ENCODE measurements at regions of chr11 and their contacts with region 1.

Region 1: DNA sequence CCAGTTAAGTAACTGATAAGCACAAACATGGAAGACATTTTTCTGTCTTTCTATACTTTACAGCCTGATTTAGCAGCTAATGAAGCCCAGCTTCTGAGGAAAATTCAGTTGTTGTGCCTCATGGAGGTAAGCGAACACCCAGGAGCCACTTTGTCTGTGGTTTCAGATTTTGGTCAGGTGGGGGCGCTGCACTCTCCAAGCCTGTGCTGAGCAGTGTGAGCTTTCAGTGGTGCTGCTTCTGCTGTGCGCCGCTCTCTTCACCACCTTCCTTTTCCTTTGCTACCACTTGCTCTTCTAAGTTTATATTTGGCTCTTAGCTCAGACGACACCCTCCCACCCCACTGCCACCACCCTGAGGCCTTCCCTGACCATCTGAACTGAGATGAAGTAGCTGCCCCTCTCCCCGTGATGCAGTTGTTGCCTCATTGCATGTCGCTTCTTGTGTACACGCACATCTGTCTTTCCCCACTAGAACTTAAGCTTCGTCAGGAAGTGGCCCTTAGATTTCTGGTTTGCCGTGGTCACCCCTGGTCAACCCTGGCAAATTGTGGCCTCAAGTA is 14.0 kb downstream of the PSMD13 start:
- DNase-seq: peak; percentile 90
- ATAC-seq: peak; percentile 97
- H3K4me3 Mint-ChIP-seq: no peak overlapping the region
- H3K27ac Mint-ChIP-seq: peak overlapping the region; percentile 56
- H3K4me1 Mint-ChIP-seq: peaks cover 13% of the 10 kb centered on the region
- H3K27me3 Mint-ChIP-seq: no peaks in the 10 kb centered on the region

Region 2: DNA sequence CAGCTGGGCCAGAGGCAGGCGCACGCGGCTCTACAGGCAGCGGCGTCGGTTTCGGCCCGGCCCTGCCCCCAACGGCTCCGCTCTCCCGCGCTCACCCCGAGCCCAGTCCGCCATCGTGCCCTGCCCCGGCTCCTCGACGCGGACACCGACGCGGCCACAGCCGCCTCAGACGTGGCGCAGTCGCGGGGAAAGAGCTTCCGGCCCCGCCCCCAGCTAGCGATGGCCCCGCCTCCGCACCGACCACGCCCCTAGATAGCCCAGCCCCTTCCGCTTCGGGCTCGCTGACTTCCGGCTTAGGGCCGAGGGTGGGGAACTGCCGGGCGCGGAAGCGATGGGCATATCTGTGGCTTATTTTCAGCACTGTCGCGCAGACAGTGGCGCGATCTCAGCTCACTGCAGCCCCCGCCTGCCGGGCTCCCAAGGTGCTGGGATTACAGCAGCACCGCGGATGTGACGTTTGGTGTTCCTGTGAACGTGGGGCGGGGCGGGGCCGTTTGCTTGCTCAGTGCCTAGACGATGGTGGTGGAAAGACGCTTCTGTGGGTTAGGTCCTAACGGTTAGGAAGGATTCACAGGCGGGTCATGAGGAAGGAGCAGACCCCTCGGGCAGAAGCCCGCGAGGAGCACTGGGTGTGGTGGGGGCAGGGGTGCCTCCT is 43.5 kb before region 1 on chr11 and contains the starts of genes BET1L and RIC8A:
- CTCF ChIA-PET with region 1: interaction called, 12 read pairs
- POLR2A ChIA-PET with region 1: no interaction called
- intact Hi-C with region 1: no loop called
- DNase-seq: peak; percentile 99
- ATAC-seq: peak; percentile 89
- H3K4me3 Mint-ChIP-seq: peak within 1 kb of the TSS; percentile 94
- H3K27ac Mint-ChIP-seq: peak within 1 kb of the TSS; percentile 99
- H3K4me1 Mint-ChIP-seq: peaks cover 56% of the 10 kb centered on the region
- H3K27me3 Mint-ChIP-seq: no peaks in the 10 kb centered on the region
- total RNA-seq, gene BET1L: 45.5 to 49.4 TPM
- total RNA-seq, gene RIC8A: 104 to 124 TPM

Region 3: GRCh38 chr11:236774-237767 is 13.7 kb before region 1 on chr11 and contains the start of gene PSMD13:
- CTCF ChIA-PET with region 1: interaction called, 69 read pairs
- POLR2A ChIA-PET with region 1: no interaction called
- intact Hi-C with region 1: no loop called
- DNase-seq: peak; percentile 96
- ATAC-seq: peak; percentile 86
- H3K4me3 Mint-ChIP-seq: peak within 1 kb of the TSS; percentile 92
- H3K27ac Mint-ChIP-seq: peak within 1 kb of the TSS; percentile 99
- H3K4me1 Mint-ChIP-seq: peaks cover 48% of the 10 kb centered on the region
- H3K27me3 Mint-ChIP-seq: no peaks in the 10 kb centered on the region
- total RNA-seq, gene PSMD13: 134 to 212 TPM

Region 4: DNA sequence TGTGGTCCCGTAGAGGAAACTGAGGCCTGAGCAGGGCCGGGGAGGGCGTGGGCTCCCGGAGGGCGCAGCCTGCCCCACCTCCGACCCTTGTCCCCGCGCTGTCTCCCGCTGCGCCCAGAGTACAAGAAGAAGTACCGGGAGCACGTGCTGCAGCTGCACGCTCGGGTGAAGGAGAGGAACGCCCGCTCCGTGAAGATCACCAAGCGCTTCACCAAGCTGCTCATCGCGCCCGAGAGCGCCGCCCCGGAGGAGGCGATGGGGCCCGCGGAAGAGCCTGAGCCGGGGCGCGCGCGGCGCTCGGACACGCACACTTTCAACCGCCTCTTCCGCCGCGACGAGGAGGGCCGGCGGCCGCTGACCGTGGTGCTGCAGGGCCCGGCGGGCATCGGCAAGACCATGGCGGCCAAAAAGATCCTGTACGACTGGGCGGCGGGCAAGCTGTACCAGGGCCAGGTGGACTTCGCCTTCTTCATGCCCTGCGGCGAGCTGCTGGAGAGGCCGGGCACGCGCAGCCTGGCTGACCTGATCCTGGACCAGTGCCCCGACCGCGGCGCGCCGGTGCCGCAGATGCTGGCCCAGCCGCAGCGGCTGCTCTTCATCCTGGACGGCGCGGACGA is 29.3 kb after region 1 on chr11:
- CTCF ChIA-PET with region 1: interaction called, 32 read pairs
- POLR2A ChIA-PET with region 1: no interaction called
- intact Hi-C with region 1: no loop called
- DNase-seq: peak; percentile 72
- ATAC-seq: peak; percentile 69
- H3K4me3 Mint-ChIP-seq: peak overlapping the region; percentile 58
- H3K27ac Mint-ChIP-seq: no peak overlapping the region
- H3K4me1 Mint-ChIP-seq: peaks cover 44% of the 10 kb centered on the region
- H3K27me3 Mint-ChIP-seq: peaks cover 21% of the 10 kb centered on the region

Region 5: DNA sequence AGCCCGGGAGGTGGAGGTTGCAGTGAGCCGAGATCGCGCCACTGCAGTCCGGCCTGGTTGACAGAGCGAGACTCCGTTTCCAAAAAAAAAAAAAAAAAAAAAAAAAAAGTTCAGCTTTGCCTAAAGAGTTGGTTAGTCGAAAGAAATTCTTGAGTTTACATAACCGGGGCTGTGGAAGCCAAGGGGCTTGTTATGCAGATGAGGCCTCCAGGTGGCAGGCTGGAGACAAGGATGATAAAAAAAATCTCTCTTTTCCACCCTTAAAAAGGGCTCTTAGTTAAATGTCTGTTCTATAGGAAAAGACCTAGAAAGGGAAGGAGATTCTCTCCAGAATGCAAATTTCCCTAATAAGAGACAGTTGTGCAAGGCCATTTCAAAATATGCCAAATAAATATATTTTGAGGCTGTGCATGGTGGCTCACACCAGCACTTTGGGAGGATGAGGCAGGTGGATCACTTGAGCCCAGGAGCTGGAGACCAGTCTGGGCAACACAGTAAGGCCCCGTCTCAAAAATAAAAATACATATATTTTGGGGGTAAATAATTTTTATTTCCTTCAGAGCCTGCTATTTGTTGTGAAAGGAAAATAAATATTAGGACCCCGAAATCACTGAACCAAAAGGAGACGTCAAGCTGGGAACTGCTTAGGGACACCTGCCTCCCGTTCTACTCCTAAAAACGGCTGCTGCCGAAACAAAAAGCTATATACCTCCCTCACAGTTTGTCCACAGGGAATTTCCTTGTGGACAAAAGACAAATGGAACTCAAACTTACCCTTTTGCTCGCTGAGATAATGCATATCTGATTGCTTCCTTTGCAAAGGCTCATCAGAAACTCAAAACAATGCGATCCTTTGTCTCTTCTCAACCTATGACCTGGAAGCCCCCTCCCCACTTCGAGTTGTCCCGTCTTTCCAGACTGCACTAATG is 54.4 kb after region 1 on chr11:
- CTCF ChIA-PET with region 1: interaction called, 46 read pairs
- POLR2A ChIA-PET with region 1: no interaction called
- intact Hi-C with region 1: loop called (anchors 2 kb)
- DNase-seq: peak; percentile 79
- ATAC-seq: no peak
- H3K4me3 Mint-ChIP-seq: no peak overlapping the region
- H3K27ac Mint-ChIP-seq: peak overlapping the region; percentile 1
- H3K4me1 Mint-ChIP-seq: peaks cover 20% of the 10 kb centered on the region
- H3K27me3 Mint-ChIP-seq: no peaks in the 10 kb centered on the region

Region 6: DNA sequence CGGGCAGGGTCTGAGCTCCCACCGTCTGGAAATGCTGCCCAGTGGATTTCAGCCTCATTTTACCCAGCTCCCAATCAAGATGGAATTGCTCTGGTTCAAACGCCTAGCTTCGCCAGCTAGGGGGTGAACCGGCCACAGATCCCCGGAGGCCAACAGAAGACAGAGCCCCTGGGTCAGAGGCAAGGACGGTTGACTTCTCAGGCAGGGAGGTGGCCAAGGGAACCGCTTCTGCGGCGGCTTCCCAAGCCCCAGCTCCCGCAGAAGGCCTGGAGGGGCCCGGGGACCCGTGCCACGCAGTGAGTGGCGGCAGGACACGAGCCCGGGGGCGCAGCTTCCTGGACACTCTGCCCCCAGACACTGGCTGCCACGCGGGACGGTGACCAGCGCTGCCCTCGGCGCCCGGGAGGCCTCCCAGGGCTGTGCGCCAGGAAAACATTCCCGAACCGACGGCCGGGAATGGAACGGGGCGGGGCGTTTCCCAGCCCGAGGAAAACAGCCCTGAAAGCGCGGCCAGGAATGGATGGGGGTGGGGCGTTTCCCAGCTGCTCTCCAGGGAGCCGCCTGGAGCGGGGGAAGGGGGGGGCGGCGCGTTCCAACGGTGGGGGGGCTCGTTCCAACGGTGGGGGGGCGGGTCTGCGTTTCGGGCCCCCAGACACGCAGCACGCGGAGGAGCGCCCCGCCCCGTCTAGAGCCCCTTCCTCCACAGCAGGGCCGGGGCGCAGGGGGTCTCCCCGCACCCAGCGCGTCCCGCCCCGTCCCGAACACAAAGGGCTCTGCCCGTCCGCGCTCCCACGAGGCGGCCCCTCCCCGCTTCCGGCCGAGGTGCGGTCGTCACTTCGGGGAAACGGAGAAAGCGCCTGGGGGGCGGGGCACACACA is 105.0 kb after region 1 on chr11:
- CTCF ChIA-PET with region 1: interaction called, 22 read pairs
- POLR2A ChIA-PET with region 1: interaction called, 4 read pairs
- intact Hi-C with region 1: loop called in 1 of 2 experiments (anchors 5 kb)
- DNase-seq: peak; percentile 94
- ATAC-seq: peak; percentile 63
- H3K4me3 Mint-ChIP-seq: no peak overlapping the region
- H3K27ac Mint-ChIP-seq: peak overlapping the region; percentile 96
- H3K4me1 Mint-ChIP-seq: peaks cover 47% of the 10 kb centered on the region
- H3K27me3 Mint-ChIP-seq: no peaks in the 10 kb centered on the region

Region 7: GRCh38 chr11:2208691-2209369 is 1958.0 kb after region 1 on chr11:
- CTCF ChIA-PET with region 1: no interaction called
- POLR2A ChIA-PET with region 1: no interaction called
- intact Hi-C with region 1: no loop called
- DNase-seq: no peak
- ATAC-seq: no peak
- H3K4me3 Mint-ChIP-seq: no peak overlapping the region
- H3K27ac Mint-ChIP-seq: no peak overlapping the region
- H3K4me1 Mint-ChIP-seq: peaks cover 7% of the 10 kb centered on the region
- H3K27me3 Mint-ChIP-seq: no peaks in the 10 kb centered on the region